CD14-positive monocyte (primary cell): ENCODE measurements at regions of chr1 and their contacts with region 1.

Region 1: DNA sequence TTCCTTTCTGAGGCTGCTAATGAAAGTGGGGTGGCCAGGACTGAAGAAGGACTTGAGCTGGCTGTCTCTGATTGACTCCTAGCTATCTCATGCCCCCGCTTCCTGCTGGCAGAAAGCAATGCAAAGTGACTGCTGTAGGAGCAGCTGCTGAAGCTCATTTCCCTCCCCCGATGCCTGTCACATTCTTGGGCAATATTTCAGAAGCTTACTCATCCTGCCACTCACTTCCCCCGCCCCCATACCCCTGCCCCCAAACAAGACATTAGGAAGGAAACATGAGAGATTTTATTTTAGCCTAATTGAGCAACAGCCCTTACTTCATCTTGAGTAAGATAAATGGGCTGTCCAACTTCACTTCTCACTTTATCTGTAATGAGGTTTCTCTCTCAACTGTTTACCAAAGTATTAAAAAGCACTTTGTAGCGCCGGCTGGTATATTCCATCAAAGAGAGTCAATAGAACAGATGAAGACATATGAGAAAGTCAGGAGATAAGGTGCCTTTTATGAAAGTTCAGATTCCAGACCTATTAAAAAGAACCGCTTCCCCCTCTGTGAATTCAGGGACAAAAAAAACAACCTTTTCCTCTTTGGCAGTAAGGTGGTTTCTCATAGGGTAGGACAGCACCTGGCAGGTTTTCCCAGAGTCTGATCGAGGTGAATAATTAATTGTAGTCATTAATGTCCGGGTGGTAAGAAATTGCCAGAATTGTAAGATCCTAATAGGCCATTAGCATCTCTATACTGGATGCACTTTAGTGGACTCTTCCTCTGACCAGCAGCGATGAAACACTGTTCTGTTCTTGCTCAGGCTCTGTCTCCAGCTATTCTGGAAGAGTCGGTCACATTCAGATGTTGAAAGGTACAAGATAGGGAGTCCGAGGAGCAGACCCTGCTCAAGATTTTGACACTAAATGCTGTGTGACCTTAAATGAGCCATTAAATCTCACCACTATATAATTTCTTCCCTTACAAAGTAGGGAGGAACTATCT is 70.2 kb downstream of the SH3GLB1 start:
- DNase-seq: peak; percentile 96 to 99 (median 97)
- H3K4me3 ChIP-seq: peak overlapping the region; percentile 13 to 67 (median 32)
- H3K4me3 Mint-ChIP-seq: peak overlapping the region; percentile 73 to 85
- H3K27ac ChIP-seq: peak overlapping the region; percentile 97 to 99
- H3K27ac Mint-ChIP-seq: peak overlapping the region; percentile 99 to 100 (median 100)
- H3K4me1 ChIP-seq: peaks cover 52 to 67% of the 10 kb centered on the region in 2 donors
- H3K4me1 Mint-ChIP-seq: peaks cover 54% of the 10 kb centered on the region
- H3K27me3 ChIP-seq: no peaks in the 10 kb centered on the region
- H3K27me3 Mint-ChIP-seq: peaks cover 0 to 3% (median 2%) of the 10 kb centered on the region in 3 donors
- CTCF ChIP-seq: no peak

Region 2: DNA sequence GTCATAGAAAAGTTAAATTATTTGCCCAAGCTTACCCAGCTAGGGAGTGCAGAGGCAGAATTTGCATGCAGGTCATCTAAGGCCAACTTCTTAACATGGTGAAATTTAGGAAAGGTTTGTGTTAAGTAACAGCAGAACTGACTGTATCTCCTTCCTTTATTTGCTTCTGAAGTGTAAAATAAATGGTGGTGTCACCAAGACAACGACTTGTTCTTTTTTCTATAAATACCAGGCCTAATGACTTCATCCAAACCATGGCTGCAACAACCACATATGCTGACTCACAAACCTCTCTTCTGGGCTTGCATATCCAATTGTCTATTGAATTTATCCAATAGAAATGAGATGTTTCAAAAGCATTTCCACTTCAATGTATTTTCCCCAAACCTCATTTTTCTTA is 637.2 kb before region 1 on chr1:
- intact Hi-C with region 1: loop called in 1 of 2 experiments (anchors 10 kb)
- DNase-seq: peak; percentile 41 to 94 (median 75)
- H3K4me3 ChIP-seq: no peak overlapping the region
- H3K4me3 Mint-ChIP-seq: no peak overlapping the region
- H3K27ac ChIP-seq: peak overlapping the region in 1 of 2 donors; percentile 60
- H3K27ac Mint-ChIP-seq: peak overlapping the region; percentile 44 to 93 (median 82)
- H3K4me1 ChIP-seq: peaks cover 11 to 15% of the 10 kb centered on the region in 2 donors
- H3K4me1 Mint-ChIP-seq: peaks cover 26% of the 10 kb centered on the region
- H3K27me3 ChIP-seq: no peaks in the 10 kb centered on the region
- H3K27me3 Mint-ChIP-seq: no peaks in the 10 kb centered on the region
- CTCF ChIP-seq: no peak

Region 3: GRCh38 chr1:86356247-86356646 is 418.4 kb before region 1 on chr1:
- intact Hi-C with region 1: no loop called
- DNase-seq: no peak
- H3K4me3 ChIP-seq: no peak overlapping the region
- H3K4me3 Mint-ChIP-seq: no peak overlapping the region
- H3K27ac ChIP-seq: no peak overlapping the region
- H3K27ac Mint-ChIP-seq: no peak overlapping the region
- H3K4me1 ChIP-seq: no peaks in the 10 kb centered on the region
- H3K4me1 Mint-ChIP-seq: no peaks in the 10 kb centered on the region
- H3K27me3 ChIP-seq: no peaks in the 10 kb centered on the region
- H3K27me3 Mint-ChIP-seq: no peaks in the 10 kb centered on the region
- CTCF ChIP-seq: no peak

Region 4: DNA sequence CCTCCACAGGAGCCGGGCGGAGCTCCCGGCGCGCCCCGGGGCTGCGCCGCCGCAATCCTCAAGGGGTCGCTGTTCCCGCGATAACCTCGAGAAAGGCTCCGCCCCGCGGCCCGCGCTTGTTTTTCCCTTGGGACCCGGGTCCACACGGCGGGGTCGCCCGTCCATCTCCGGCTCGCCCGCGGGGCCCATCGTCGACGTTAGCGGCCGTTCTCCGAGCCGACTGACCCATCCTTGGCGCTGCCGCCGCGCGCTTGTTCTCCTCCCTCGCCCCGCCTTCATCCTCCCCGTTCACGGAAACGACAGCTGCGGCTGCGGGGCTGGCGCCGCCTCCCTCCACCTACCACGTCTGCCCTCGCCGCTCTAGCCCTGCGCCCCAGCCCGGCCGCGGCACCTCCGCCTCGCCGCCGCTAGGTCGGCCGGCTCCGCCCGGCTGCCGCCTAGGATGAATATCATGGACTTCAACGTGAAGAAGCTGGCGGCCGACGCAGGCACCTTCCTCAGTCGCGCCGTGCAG is 70.1 kb before region 1 on chr1 and contains the start of gene SH3GLB1:
- intact Hi-C with region 1: loop called in 1 of 2 experiments (anchors 10 kb)
- DNase-seq: peak; percentile 78 to 83 (median 79)
- H3K4me3 ChIP-seq: peak within 1 kb of the TSS; percentile 55 to 95 (median 68)
- H3K4me3 Mint-ChIP-seq: peak within 1 kb of the TSS; percentile 99 to 100
- H3K27ac ChIP-seq: peak within 1 kb of the TSS; percentile 95 to 98
- H3K27ac Mint-ChIP-seq: peak within 1 kb of the TSS; percentile 98 to 100 (median 99)
- H3K4me1 ChIP-seq: peaks cover 26 to 32% of the 10 kb centered on the region in 2 donors
- H3K4me1 Mint-ChIP-seq: peaks cover 37% of the 10 kb centered on the region
- H3K27me3 ChIP-seq: no peaks in the 10 kb centered on the region
- H3K27me3 Mint-ChIP-seq: peaks cover 0 to 3% (median 0%) of the 10 kb centered on the region in 3 donors
- CTCF ChIP-seq: peak; percentile 98
- polyA plus RNA-seq, gene SH3GLB1: 21.9 to 92.3 (median 75.8) TPM

Region 5: GRCh38 chr1:86788300-86789206 is 14.0 kb after region 1 on chr1:
- intact Hi-C with region 1: loop called (anchors 2 kb)
- DNase-seq: peak; percentile 84 to 96 (median 96)
- H3K4me3 ChIP-seq: peak overlapping the region in 1 of 3 experiments; percentile 37
- H3K4me3 Mint-ChIP-seq: peak overlapping the region in 1 of 2 donors; percentile 59
- H3K27ac ChIP-seq: peak overlapping the region; percentile 91 to 95
- H3K27ac Mint-ChIP-seq: peak overlapping the region; percentile 95 to 100 (median 98)
- H3K4me1 ChIP-seq: peaks cover 30 to 39% of the 10 kb centered on the region in 2 donors
- H3K4me1 Mint-ChIP-seq: peaks cover 40% of the 10 kb centered on the region
- H3K27me3 ChIP-seq: no peaks in the 10 kb centered on the region
- H3K27me3 Mint-ChIP-seq: no peaks in the 10 kb centered on the region
- CTCF ChIP-seq: no peak

Region 6: DNA sequence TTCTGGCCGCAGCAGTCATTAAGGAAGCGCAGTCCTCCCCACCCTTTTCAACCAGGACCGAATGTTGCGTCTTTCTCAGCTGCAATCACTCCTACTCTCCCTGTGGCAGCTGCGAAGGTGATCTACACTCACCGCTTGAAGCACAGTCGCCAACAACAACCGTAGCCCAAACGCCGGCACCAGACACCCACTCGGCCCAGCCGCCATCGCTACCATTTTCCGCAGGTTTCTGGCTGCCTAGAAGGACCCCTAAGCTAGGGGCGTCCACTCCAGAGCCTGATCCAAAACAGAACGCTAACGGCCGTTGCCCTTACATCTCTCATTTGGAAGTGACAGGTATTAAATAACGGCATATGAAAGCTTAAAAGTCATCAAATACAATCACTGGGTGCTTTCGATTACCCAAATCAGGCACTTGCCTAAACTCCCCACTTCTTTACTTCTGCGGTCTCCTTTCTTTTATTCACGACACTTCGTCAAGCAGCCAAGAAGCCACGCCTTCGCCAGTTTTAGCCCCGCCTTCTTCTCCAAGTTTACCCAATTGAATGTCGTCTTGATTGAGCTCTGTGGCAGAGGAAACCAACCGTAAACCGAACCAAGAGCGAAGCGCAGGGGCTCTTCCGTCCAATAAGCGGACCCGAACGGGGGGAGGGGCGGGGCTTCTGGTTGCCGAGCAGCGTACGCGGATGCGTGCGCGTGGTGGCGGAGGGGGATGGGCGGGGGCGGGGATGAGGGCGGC is 139.5 kb after region 1 on chr1 and contains the start of gene SELENOF:
- intact Hi-C with region 1: loop called in 1 of 2 experiments (anchors 10 kb)
- DNase-seq: peak; percentile 99 to 100 (median 100)
- H3K4me3 ChIP-seq: peak within 1 kb of the TSS; percentile 93 to 99 (median 98)
- H3K4me3 Mint-ChIP-seq: no peak within 1 kb of the TSS
- H3K27ac ChIP-seq: peak within 1 kb of the TSS; percentile 87 to 99
- H3K27ac Mint-ChIP-seq: no peak within 1 kb of the TSS
- H3K4me1 ChIP-seq: peaks cover 17 to 22% of the 10 kb centered on the region in 2 donors
- H3K4me1 Mint-ChIP-seq: peaks cover 28% of the 10 kb centered on the region
- H3K27me3 ChIP-seq: no peaks in the 10 kb centered on the region
- H3K27me3 Mint-ChIP-seq: no peaks in the 10 kb centered on the region
- CTCF ChIP-seq: no peak
- polyA plus RNA-seq, gene SELENOF: 111 to 357 (median 339) TPM

Region 7: GRCh38 chr1:86953167-86953566 is 178.6 kb after region 1 on chr1:
- intact Hi-C with region 1: no loop called
- DNase-seq: no peak
- H3K4me3 ChIP-seq: no peak overlapping the region
- H3K4me3 Mint-ChIP-seq: no peak overlapping the region
- H3K27ac ChIP-seq: no peak overlapping the region
- H3K27ac Mint-ChIP-seq: no peak overlapping the region
- H3K4me1 ChIP-seq: no peaks in the 10 kb centered on the region
- H3K4me1 Mint-ChIP-seq: no peaks in the 10 kb centered on the region
- H3K27me3 ChIP-seq: no peaks in the 10 kb centered on the region
- H3K27me3 Mint-ChIP-seq: no peaks in the 10 kb centered on the region
- CTCF ChIP-seq: no peak

Region 8: GRCh38 chr1:87074001-87074795 is 299.6 kb after region 1 on chr1:
- intact Hi-C with region 1: no loop called
- DNase-seq: no peak
- H3K4me3 ChIP-seq: no peak overlapping the region
- H3K4me3 Mint-ChIP-seq: no peak overlapping the region
- H3K27ac ChIP-seq: no peak overlapping the region
- H3K27ac Mint-ChIP-seq: no peak overlapping the region
- H3K4me1 ChIP-seq: no peaks in the 10 kb centered on the region
- H3K4me1 Mint-ChIP-seq: peaks cover 2% of the 10 kb centered on the region
- H3K27me3 ChIP-seq: no peaks in the 10 kb centered on the region
- H3K27me3 Mint-ChIP-seq: no peaks in the 10 kb centered on the region
- CTCF ChIP-seq: no peak